ENCODE measurements at regions of chr5 and their contacts with region 1.

Region 1: GRCh38 chr5:107232788-107233187 is 437.9 kb downstream of the EFNA5 start:
- H3K4me3 ChIP-seq: no peak overlapping the region
- H3K27ac ChIP-seq: no peak overlapping the region
- H3K4me1 ChIP-seq: no peaks in the 10 kb centered on the region
- CTCF ChIP-seq: no peak

Region 2: DNA sequence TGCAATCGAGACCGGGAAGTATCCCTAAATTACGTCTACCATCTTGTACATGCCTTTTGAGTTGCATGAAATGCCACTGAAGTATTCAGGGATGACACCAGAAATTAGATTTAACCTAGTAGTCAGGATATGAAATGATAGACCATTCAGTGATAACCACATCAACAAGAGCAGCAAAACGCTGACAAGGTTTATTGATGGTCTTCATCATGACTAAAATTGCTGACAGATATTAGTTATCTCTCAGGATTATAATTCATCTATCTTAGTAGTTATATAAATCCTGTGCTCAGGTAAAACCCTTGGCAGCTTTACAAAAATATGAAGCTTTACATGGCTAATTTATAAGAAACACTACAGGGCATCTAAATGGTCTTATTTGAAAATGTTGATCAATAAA is 666.8 kb before region 1 on chr5:
- CTCF ChIA-PET with region 1: no interaction called
- POLR2A ChIA-PET with region 1: no interaction called
- H3K4me3 ChIP-seq: no peak overlapping the region
- H3K27ac ChIP-seq: no peak overlapping the region
- H3K4me1 ChIP-seq: no peaks in the 10 kb centered on the region
- CTCF ChIP-seq: no peak

Region 3: DNA sequence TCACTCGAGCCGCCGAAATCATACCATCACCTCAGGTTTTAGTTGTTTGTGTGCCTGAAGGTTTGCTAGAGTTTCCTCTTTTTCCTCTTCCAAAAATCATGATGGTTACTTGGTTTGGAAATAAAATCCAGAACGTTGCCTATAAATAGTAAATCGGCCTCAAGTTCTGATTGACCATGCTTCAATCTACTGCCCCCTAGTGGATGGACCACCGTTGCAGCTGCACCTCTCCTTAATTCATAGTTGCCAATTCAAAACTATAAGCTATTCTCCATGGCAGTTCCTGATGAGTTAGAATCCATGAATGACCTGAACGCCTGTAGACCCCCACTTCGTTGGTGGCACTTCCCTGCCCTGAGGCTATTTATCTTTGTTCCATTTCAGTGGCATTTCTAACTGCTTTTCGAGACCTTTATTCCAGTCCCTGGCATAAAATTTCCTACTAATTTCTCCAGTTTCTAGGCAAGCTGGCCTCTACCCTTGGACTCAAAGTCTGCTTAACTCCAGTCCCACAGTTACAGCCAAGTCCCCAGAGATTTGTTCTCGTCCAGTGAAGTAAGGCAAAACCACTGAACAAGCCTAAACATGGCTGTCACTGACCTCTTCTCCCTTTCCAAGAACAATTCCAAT is 15.4 kb after region 1 on chr5:
- CTCF ChIA-PET with region 1: interaction called, 34 read pairs
- POLR2A ChIA-PET with region 1: no interaction called
- H3K4me3 ChIP-seq: no peak overlapping the region
- H3K27ac ChIP-seq: no peak overlapping the region
- H3K4me1 ChIP-seq: no peaks in the 10 kb centered on the region
- CTCF ChIP-seq: no peak

Measured in HEK293 (cell line).